Caco-2 (cell line): ENCODE measurements at regions of chr1 and their contacts with region 1.

Region 1: GRCh38 chr1:179293340-179294327 is at the start of gene SOAT1:
- DNase-seq: peak; percentile 95 to 96
- H3K4me3 ChIP-seq: peak within 1 kb of the TSS; percentile 47
- H3K4me3 Mint-ChIP-seq: peak within 1 kb of the TSS; percentile 99
- H3K27ac Mint-ChIP-seq: peak within 1 kb of the TSS; percentile 99
- H3K4me1 ChIP-seq: peaks cover 39% of the 10 kb centered on the region
- H3K4me1 Mint-ChIP-seq: peaks cover 40% of the 10 kb centered on the region
- H3K27me3 ChIP-seq: no peaks in the 10 kb centered on the region
- H3K27me3 Mint-ChIP-seq: no peaks in the 10 kb centered on the region
- CTCF ChIP-seq: peak in 1 of 2 experiments; percentile 25
- total RNA-seq, gene SOAT1: 36.9 and 43.0 TPM in 2 replicates

Region 2: DNA sequence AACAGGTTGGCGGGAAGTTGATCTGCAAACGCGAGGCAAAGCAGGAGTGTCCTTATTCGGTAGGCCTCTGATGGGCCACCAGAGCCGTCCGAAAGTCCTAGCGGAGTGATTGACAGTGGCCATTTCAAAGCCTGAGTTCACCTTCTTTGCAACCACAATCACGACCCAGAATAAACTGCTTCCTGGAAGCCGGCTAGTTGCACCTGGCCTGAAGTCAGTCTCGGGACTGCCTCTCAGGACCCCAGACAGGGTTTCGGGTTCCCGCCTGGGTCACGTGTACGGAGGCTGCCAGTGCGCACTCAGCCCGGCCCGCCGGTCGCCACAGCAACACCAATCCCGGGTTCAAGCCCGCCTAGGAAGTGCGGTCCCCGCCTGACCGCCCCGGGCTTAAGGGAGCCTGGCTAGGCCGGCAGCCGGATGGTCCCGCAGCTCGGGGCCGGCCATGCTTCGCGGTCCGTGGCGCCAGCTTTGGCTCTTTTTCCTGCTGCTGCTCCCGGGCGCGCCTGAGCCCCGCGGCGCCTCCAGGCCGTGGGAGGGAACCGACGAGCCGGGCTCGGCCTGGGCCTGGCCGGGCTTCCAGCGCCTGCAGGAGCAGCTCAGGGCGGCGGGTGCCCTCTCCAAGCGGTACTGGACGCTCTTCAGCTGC is 211.8 kb before region 1 on chr1 and contains the start of gene TOR3A:
- CTCF ChIA-PET with region 1: interaction called, 3 read pairs
- POLR2A ChIA-PET with region 1: interaction called, 4 read pairs
- intact Hi-C with region 1: loop called (anchors 2 kb)
- DNase-seq: peak; percentile 93 to 94
- H3K4me3 ChIP-seq: peak within 1 kb of the TSS; percentile 97
- H3K4me3 Mint-ChIP-seq: peak within 1 kb of the TSS; percentile 98
- H3K27ac Mint-ChIP-seq: peak within 1 kb of the TSS; percentile 96
- H3K4me1 ChIP-seq: peaks cover 5% of the 10 kb centered on the region; the same call in 1 of the 2 replicates
- H3K4me1 Mint-ChIP-seq: peaks cover 9% of the 10 kb centered on the region
- H3K27me3 ChIP-seq: no peaks in the 10 kb centered on the region
- H3K27me3 Mint-ChIP-seq: no peaks in the 10 kb centered on the region
- CTCF ChIP-seq: no peak
- total RNA-seq, gene TOR3A: 25.0 and 25.2 TPM in 2 replicates

Region 3: DNA sequence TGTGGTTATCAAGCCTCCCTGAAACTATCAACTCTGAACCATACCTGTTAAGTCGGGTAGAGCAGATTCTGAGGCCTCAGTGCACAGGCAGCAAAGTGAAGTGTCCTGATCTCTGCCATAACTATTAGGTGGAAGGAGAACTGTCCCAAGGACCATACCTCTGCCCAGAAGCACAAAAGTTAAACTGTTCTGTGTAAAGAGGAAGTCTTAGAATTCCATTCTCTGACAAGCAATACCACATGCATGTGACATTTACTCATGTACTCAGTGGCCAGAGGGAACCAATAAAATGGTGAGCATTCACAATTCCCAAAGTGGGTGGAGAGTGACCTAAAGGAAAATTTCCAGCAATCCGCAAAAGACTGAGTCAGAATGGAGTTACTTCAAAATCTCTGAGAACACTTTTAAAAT is 150.7 kb before region 1 on chr1:
- CTCF ChIA-PET with region 1: no interaction called
- POLR2A ChIA-PET with region 1: no interaction called
- intact Hi-C with region 1: loop called (anchors 5 kb)
- DNase-seq: peak in 1 of 2 experiments; percentile 48
- H3K4me3 ChIP-seq: no peak overlapping the region
- H3K4me3 Mint-ChIP-seq: no peak overlapping the region
- H3K27ac Mint-ChIP-seq: no peak overlapping the region
- H3K4me1 ChIP-seq: peaks cover 13% of the 10 kb centered on the region; the same call in 1 of the 2 replicates
- H3K4me1 Mint-ChIP-seq: peaks cover 7% of the 10 kb centered on the region
- H3K27me3 ChIP-seq: no peaks in the 10 kb centered on the region
- H3K27me3 Mint-ChIP-seq: no peaks in the 10 kb centered on the region
- CTCF ChIP-seq: no peak

Region 4: DNA sequence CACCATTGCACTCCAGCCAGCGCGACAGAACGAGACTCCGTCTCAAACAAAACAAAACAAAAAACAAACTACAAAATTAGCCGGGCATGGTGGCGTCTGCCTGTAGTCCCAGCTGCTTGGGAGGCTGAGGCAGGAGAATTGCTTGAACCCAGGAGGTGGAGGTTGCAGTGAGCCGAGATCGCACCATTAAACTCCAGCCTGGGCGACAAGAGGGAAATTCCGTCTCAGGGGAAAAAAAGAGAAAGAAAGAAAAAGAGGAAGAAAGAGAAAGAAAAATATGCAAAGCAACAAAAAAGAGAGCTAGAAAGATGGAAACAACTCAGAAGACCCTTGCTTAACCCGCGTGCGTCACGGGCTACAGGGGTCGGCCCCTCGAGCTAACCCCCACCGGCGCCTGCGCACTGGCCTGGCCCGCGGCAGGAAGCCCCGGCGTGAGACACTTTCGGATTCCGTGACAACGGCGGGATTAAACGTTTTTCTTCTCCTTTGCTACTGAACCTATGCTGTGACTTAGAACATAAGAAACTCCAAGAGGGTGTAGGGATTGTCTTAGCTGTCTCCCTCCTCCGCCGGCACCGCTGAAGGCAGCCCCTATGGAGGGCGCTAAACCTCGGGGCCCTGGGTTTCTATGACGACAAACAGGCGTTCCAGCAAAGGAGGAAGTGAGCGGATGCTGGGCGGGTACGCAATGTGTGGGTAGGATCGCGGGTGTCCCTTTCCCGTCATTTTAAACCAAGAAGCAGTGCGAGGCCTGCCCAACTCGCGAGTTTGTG is 71.9 kb after region 1 on chr1 and contains the start of gene AXDND1:
- CTCF ChIA-PET with region 1: interaction called, 4 read pairs
- POLR2A ChIA-PET with region 1: interaction called, 5 read pairs
- intact Hi-C with region 1: loop called (anchors 1 kb)
- DNase-seq: peak; percentile 86 to 87
- H3K4me3 ChIP-seq: peak within 1 kb of the TSS; percentile 70
- H3K4me3 Mint-ChIP-seq: peak within 1 kb of the TSS; percentile 98
- H3K27ac Mint-ChIP-seq: peak within 1 kb of the TSS; percentile 99
- H3K4me1 ChIP-seq: peaks cover 15% of the 10 kb centered on the region
- H3K4me1 Mint-ChIP-seq: no peaks in the 10 kb centered on the region
- H3K27me3 ChIP-seq: no peaks in the 10 kb centered on the region
- H3K27me3 Mint-ChIP-seq: no peaks in the 10 kb centered on the region
- CTCF ChIP-seq: peak; percentile 14 to 54
- total RNA-seq, gene AXDND1: not detected in 2 replicates

Region 5: DNA sequence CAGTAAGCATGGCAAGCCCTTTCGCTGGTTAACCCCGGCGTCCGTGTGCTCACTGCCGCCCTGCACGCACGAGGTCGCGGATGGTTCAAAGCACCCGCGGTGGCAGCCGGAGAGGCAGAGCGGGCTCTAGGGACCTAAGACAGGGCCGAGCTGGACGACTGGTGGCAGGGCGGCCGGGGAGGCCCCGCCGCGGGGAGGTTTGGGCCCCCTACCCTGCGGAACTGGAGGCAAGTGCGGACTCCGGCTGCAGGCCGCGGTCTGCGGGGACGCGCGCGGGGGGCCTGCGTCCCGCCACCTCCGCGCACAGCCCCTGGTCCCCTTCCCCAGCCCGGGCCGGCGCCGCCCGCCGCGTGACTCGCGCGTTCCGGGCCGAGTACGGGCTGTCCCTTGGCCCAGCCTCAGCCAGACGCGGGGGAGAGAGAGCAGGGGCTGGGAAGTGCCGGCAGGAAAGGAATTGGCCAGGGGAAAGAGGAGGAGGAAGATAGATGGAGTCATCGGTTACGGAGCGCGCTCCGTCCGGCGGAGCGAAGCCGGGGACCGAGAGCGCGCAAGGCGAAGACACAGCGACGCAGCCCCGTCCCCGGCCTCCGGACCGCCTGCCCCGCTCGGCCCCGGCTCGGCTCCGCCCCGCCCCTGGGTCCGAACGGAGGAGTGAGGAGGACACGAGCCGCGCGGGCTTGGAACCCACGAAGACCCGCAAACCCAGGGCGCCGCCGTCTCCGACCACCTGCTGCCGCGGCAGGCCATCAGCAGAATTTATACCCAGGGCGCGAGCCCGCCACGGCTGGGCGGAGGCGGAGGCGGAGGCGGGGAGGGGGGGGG is 935.7 kb after region 1 on chr1:
- CTCF ChIA-PET with region 1: no interaction called
- POLR2A ChIA-PET with region 1: interaction called, 17 read pairs
- intact Hi-C with region 1: no loop called
- DNase-seq: peak in 1 of 2 experiments; percentile 52
- H3K4me3 ChIP-seq: peak overlapping the region; percentile 60
- H3K4me3 Mint-ChIP-seq: peak overlapping the region; percentile 79
- H3K27ac Mint-ChIP-seq: no peak overlapping the region
- H3K4me1 ChIP-seq: peaks cover 6% of the 10 kb centered on the region; the same call in 1 of the 2 replicates
- H3K4me1 Mint-ChIP-seq: no peaks in the 10 kb centered on the region
- H3K27me3 ChIP-seq: peaks cover 11% of the 10 kb centered on the region
- H3K27me3 Mint-ChIP-seq: peaks cover 23% of the 10 kb centered on the region
- CTCF ChIP-seq: no peak